AG04450 (cell line): ENCODE measurements at regions of chr11 and their contacts with region 1.

Region 1: GRCh38 chr11:122505304-122506006 is 150.1 kb upstream of the UBASH3B start:
- DNase-seq: peak; percentile 81
- H3K4me3 ChIP-seq: no peak overlapping the region
- H3K27ac ChIP-seq: no peak overlapping the region
- H3K27me3 ChIP-seq: no peaks in the 10 kb centered on the region
- CTCF ChIP-seq: peak; percentile 90

Region 2: DNA sequence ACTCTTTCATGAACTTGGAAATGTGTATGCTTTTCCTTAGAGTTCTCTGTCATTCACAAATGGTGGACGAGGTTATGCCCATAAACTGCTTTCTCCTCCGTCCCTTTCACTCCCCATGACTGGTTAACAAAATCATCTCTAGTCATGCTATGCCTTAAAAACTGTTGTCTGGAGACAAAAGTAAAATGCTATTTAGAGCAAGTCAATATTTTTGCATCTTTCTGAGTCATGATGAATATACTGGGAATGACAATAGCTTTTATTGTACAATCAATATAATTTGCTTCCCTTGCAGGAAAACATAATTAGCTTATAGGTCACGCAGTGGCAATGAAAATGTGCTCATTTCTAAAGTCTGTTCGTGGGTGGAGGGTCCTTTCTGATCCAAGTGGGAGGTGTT is 836.0 kb before region 1 on chr11:
- CTCF ChIA-PET with region 1: interaction called, 13 read pairs
- POLR2A ChIA-PET with region 1: no interaction called
- DNase-seq: no peak
- H3K4me3 ChIP-seq: no peak overlapping the region
- H3K27ac ChIP-seq: no peak overlapping the region
- H3K27me3 ChIP-seq: no peaks in the 10 kb centered on the region
- CTCF ChIP-seq: no peak

Region 3: GRCh38 chr11:122202951-122203456 is 302.5 kb before region 1 on chr11:
- CTCF ChIA-PET with region 1: interaction called, 22 read pairs
- POLR2A ChIA-PET with region 1: no interaction called
- DNase-seq: peak; percentile 48
- H3K4me3 ChIP-seq: peak overlapping the region; percentile 70
- H3K27ac ChIP-seq: peak overlapping the region; percentile 79
- H3K27me3 ChIP-seq: no peaks in the 10 kb centered on the region
- CTCF ChIP-seq: peak; percentile 99

Region 4: GRCh38 chr11:122478986-122479385 is 26.5 kb before region 1 on chr11:
- CTCF ChIA-PET with region 1: no interaction called
- POLR2A ChIA-PET with region 1: no interaction called
- DNase-seq: no peak
- H3K4me3 ChIP-seq: no peak overlapping the region
- H3K27ac ChIP-seq: no peak overlapping the region
- H3K27me3 ChIP-seq: peaks cover 6% of the 10 kb centered on the region
- CTCF ChIP-seq: no peak

Region 5: DNA sequence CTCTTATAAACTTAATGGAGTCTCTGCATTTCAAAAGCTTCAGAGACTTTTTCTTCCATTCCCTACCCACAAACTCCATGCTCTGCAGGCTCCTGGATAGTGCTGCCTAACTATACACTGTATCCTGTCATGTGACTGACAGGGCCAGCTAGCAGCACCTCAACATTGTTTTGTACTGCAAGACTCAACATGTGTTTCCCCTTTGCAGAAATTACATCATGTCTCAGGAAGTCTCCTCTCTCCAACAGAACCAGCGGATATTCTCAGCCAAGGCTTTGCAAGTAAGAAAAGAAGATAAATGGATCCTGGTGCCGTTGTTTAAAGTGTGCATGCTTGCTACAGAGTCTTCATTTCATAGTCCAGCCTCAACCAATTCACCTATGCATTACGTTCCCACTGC is 13.9 kb before region 1 on chr11:
- CTCF ChIA-PET with region 1: interaction called, 28 read pairs
- POLR2A ChIA-PET with region 1: no interaction called
- DNase-seq: peak; percentile 48
- H3K4me3 ChIP-seq: no peak overlapping the region
- H3K27ac ChIP-seq: no peak overlapping the region
- H3K27me3 ChIP-seq: peaks cover 3% of the 10 kb centered on the region
- CTCF ChIP-seq: no peak

Region 6: GRCh38 chr11:122668562-122669090 is 163.2 kb after region 1 on chr11:
- CTCF ChIA-PET with region 1: no interaction called
- POLR2A ChIA-PET with region 1: no interaction called
- DNase-seq: peak; percentile 66
- H3K4me3 ChIP-seq: no peak overlapping the region
- H3K27ac ChIP-seq: peak overlapping the region; percentile 33
- H3K27me3 ChIP-seq: no peaks in the 10 kb centered on the region
- CTCF ChIP-seq: no peak